ENCODE measurements at regions of chr18 and their contacts with region 1.

Region 1: GRCh38 chr18:58043491-58044379 is at the start of gene NEDD4L:
- H3K4me3 ChIP-seq: peak within 1 kb of the TSS; percentile 81
- H3K27ac ChIP-seq: peak within 1 kb of the TSS; percentile 95
- H3K4me1 ChIP-seq: peaks cover 17% of the 10 kb centered on the region
- CTCF ChIP-seq: peak; percentile 86

Region 2: DNA sequence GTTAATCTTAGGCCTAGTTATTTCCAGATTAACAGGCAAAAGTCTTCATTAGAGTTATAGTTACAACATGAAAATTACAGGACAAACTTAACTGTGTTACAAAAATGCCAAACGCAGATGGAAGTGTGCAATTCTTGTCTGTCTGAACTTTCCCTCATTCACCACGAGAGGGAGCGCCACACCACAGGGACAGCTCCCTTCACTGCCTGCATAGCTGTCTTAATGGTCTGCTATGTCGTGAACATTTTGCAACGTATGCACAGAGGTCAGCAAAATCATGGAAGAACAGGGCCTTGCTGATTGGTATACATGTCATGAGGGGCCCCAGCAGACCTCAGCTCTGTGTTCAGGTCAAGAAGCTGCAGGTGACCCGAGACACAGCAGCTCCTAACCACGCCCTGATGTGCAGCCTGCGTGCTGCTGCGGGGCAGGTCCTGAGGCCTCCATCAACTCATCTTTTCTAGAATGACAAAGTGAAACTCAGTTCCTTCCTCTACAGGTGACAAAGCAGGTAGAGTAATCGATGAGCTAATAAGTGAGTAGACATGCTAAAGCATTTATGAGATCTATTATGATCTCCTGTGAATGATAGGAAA is 161.8 kb before region 1 on chr18:
- CTCF ChIA-PET with region 1: interaction called, 21 read pairs
- POLR2A ChIA-PET with region 1: no interaction called
- H3K4me3 ChIP-seq: no peak overlapping the region
- H3K27ac ChIP-seq: no peak overlapping the region
- H3K4me1 ChIP-seq: no peaks in the 10 kb centered on the region
- CTCF ChIP-seq: peak; percentile 88

Region 3: DNA sequence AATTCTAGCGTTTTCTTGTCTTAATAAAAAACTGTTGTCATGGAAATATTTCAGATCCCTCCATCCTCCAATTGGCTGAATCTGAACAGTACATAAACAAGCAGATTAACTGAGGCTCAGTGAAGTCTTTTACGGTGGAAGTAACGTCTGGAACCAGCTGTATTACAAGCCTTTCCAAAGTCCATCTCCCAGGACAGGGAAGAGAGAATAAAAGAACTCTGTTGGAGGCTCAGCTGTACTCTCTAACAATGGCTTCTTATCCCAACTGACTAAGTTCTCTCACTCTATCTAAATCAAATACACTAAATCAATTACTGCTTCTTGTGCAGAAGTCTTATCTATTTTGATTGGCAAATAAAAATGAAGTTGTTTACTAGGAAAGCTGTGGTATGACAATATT is 19.6 kb before region 1 on chr18:
- CTCF ChIA-PET with region 1: interaction called, 14 read pairs
- POLR2A ChIA-PET with region 1: no interaction called
- H3K4me3 ChIP-seq: no peak overlapping the region
- H3K27ac ChIP-seq: no peak overlapping the region
- H3K4me1 ChIP-seq: peaks cover 4% of the 10 kb centered on the region; the same call in 1 of the 2 replicates
- CTCF ChIP-seq: no peak

Region 4: DNA sequence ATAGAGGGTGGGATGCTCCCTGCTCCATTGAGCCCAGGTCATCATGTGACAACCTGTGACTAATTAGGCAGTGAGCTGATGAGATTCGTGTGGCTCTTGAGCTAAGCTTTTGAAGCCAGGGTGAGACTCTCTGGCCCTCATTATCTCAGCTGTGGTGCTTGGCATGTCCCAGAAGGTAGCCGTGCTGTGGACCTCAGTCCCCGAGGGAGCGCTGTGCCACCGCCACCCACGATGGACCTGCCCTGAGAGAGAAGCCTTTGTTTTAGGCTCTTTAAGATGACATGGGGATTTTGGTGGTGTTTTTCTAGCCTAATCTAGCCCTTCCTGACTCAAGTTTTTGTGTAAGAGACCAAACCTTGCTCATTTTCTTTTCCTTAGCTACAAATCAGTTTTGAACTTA is 66.7 kb after region 1 on chr18:
- CTCF ChIA-PET with region 1: interaction called, 11 read pairs
- POLR2A ChIA-PET with region 1: no interaction called
- H3K4me3 ChIP-seq: no peak overlapping the region
- H3K27ac ChIP-seq: no peak overlapping the region
- H3K4me1 ChIP-seq: peaks cover 6% of the 10 kb centered on the region; the same call in 1 of the 2 replicates
- CTCF ChIP-seq: no peak

Region 5: DNA sequence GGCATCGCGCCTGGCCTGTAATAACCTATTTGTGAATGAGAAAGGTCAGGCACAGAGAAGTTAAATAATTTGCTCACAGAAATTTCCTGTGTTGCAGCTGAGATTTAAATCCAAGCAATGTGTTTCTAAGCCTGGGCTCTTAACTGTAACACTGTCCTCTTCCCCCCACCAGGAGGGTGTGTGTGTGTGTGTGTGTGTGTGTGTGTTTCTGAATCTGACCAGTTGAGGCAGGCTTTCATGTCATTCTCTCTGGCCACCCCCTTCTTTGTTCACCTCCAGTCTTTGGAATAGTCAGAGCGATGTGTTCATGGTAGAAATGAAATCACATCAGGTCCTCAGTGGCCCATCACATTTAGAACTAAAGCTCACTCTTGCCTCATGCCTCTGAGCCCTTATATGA is 81.4 kb after region 1 on chr18:
- CTCF ChIA-PET with region 1: interaction called, 100 read pairs
- POLR2A ChIA-PET with region 1: interaction called, 4 read pairs
- H3K4me3 ChIP-seq: no peak overlapping the region
- H3K27ac ChIP-seq: no peak overlapping the region
- H3K4me1 ChIP-seq: no peaks in the 10 kb centered on the region
- CTCF ChIP-seq: peak; percentile 72

Measured in HEK293 (cell line).